Posterior cingulate gyrus (tissue), 11 donors: ENCODE measurements at regions of chr2 and their contacts with region 1.

Region 1: DNA sequence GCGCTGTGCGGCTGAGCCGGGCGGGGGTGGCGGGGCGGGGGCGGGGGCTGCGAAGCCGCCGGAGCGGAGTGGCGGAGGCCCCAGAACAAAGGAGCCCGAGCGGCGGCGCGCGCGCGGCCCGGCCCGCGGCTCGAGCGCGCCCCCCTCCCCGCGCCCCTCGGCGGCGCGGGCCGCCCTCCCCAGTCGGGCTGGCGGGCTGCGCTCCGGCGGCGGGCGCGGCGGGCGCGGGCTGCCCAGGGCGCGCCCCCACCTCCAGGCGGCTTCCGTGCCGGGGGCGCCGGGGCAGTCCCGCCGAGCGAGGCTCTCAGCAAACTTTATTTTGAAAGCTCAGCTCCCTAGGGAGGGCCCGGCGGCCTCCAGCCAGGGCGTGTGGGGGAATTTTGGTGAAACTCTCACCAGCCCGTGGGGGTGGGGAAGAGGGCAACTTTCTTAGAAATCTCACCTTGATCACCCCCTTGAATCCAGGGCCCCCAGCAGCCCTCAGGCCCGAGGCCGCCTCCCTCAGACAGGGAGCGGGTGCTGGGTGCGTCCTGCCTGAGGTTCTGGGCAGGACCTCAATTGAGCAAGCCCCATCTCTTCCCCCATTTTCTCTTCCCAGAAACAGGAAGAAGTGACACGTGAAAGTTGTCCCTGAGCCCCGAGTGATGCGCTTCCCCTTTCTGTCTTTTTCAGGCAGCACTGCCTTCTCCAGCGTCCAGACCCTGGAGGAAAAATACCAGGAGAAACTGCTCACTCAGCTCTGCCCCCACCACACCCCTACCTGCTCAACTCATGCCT is 786 bp downstream of the TET3 start:
- DNase-seq: peak in 2 of 10 donors; percentile 9 to 82

Region 2: DNA sequence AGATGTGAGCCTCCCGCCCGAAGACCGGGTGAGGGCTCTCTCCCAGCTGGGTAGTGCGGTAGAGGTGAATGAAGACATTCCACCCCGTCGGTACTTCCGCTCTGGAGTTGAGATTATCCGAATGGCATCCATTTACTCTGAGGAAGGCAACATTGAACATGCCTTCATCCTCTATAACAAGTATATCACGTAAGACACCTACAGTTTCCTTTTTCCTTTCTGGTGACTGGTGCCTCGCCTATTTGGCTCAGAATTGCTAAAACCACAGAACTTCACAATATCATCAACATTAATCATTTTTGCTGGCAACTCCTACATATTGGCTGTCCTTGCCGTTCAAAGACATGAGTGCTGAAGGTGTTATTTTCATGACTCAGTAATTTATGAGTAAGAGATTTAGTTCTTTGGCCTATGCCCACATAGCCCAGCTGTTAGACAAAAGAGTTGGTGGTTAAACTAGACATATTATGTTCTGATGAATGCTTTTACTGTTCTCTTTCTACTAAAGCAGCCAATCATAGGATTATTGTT is 154.6 kb before region 1 on chr2:
- intact Hi-C with region 1: loop called (anchors 5 kb)
- DNase-seq: no peak

Region 3: GRCh38 chr2:73877071-73877802 is 108.3 kb before region 1 on chr2:
- intact Hi-C with region 1: no loop called
- DNase-seq: no peak

Region 4: GRCh38 chr2:73931531-73932500 is 53.7 kb before region 1 on chr2:
- intact Hi-C with region 1: loop called (anchors 5 kb)
- DNase-seq: no peak